Right ventricle myocardium inferior (tissue), 1 donor: ENCODE measurements at regions of chr5 and their contacts with region 1.

Region 1: DNA sequence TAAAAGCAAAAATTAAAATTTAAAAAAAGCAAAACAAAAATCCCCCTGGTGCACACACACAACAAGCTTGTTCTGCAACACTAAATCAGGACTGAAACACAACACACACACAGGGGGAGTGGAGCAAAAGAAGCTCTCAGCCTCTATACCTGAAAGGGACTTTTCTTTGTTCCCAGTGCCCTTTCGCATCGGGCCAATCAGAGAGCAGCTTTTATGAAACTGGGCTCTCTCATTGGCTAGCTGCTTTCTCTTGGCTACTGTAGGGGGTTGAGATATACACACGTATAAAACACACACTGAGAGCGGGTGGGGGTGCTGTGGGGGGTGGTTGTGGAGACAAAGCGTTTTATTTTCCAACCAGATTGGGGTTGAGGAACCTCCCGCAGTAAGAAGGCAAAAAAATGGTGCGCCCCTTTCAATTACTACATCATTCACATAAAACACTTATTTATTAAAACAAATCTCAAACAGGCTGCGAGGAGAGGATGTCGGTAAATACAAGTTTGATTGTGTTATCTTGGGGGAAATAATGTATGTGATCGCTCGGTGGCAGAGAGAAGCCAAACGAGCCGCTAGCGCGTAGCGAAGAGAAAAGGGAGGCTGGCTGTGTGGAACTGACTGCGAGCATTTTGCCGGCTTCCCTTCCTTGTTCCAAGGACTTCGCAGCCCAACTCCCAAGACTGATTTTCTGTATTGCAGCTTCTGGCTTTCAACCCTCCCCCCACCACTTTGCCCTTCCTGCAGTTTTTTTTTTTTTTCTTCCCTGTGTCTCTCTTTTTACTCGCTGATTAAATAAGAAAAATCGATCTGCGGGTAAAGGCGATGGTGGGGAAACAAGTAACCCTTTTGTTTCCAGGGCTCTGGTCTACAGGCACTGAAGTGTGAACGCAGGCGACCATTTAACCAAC is 2.5 kb upstream of the ZNF608 start:
- DNase-seq: no peak
- ATAC-seq: peak; percentile 88

Region 2: GRCh38 chr5:124536333-124536732 is 212.6 kb before region 1 on chr5:
- intact Hi-C with region 1: loop called (anchors 10 kb)
- DNase-seq: no peak
- ATAC-seq: no peak

Region 3: DNA sequence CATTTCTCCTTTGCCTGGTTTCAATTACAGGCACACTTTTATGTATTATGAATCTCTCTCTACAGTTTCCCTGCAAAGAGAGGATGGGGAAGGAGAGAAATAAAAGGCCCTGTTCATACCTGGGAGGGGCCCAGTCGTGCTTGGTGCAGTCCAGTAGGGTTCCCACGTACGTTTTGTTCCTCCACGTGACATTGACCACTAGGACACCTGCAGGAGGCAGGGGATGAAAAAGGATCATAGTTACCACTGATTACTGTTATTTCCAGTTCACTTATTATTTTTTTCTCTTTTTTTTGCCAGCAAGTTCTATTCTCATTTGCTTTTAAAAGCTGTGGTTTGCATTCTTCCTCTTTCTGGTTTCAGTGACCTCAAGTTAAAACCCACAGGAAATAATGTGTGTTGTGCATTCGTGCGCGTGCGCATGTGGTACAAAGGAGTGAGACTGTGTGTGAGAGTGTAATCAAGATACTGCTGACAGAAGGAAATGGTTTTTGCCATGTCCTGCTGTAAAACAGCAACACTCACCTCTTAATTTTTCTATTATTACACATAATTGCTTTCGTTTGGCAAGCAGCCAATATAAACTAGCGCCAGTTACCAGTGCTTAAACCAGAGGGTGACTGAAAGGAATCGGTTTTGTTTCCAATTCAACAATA is 99.3 kb before region 1 on chr5:
- intact Hi-C with region 1: loop called (anchors 1 kb)
- DNase-seq: peak; percentile 93
- ATAC-seq: peak; percentile 43

Region 4: DNA sequence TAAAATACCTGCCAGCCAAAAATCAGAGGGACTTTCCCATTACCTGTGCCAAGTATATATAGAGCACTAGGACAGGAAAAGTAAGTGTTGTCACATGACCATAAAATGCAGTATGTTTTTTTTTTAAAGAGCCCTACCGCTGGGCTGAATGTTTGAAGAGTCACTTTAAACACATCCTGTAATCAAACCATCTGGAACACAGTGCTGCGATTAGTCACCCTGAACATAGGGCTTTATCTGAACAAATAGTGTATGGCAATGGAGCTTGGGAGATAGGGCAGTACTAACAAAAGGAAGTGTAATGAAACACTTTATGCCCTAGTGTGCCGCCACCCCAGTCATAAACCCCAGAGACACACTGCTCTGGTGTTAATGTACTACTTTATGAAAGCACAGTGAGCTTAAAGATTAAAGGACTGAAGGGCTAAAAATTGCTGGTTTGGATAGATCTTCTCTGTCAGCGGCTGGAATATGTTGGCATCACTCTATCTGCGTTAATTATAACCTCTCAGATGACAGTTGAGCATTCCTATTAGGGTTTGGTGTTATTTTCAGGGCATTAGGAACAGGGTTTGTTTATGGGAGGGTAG is 92.9 kb before region 1 on chr5:
- intact Hi-C with region 1: loop called (anchors 1 kb)
- DNase-seq: no peak
- ATAC-seq: peak; percentile 63

Region 5: DNA sequence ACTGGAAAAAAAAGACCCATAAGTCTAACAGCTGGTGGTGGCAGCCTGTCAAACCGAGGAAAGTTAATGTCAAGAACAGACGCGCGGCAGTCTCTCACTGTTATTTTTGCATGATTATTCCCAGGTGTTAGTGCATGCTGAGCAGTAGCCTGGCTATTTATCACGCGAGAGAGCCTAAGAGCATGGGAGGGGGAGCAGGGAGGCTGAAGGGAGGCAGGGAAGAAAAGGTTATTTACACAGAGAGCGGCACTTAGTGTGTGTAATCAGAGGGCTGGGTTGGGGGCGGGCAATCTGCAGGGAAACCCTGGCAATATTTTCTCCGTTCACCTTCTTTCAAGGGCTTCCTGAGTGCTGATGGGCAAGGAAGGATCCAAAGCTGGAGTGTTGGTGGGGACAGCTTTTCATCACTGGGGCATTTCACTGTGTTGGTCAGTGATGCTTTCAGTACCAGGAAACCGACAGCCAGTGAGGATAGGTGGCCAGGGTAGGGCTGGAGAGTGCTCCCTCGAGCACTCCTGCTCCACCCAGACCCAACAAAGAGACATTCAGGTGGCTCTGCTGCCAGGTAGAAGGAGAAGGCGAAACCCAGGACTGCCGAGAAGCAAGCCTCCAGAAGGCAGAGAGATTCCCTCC is 42.1 kb before region 1 on chr5:
- intact Hi-C with region 1: loop called (anchors 5 kb)
- DNase-seq: no peak
- ATAC-seq: peak; percentile 61

Region 6: GRCh38 chr5:124902097-124902821 is 153.3 kb after region 1 on chr5:
- intact Hi-C with region 1: loop called (anchors 2 kb)
- DNase-seq: no peak
- ATAC-seq: no peak

Region 7: GRCh38 chr5:124948062-124948753 is 199.3 kb after region 1 on chr5:
- intact Hi-C with region 1: loop called (anchors 5 kb)
- DNase-seq: no peak
- ATAC-seq: no peak